Adrenal gland (tissue), 19 donors: ENCODE measurements at regions of chr1 and their contacts with region 1.

Region 1: GRCh38 chr1:22451702-22452474 is at the start of gene ZBTB40:
- DNase-seq: peak; percentile 98 to 99 (median 98)
- H3K4me3 ChIP-seq: peak within 1 kb of the TSS; percentile 62 to 94 (median 80)
- H3K27ac ChIP-seq: peak within 1 kb of the TSS; percentile 88 to 96 (median 93)
- H3K4me1 ChIP-seq: peaks cover 58 to 70% of the 10 kb centered on the region in 2 donors
- H3K27me3 ChIP-seq: no peaks in the 10 kb centered on the region
- CTCF ChIP-seq: peak in 1 of 6 experiments; percentile 10
- POLR2A ChIP-seq: peak in 1 of 2 donors; percentile 22
- total RNA-seq, gene ZBTB40: 18.4 to 45.7 (median 30.8) TPM

Region 2: DNA sequence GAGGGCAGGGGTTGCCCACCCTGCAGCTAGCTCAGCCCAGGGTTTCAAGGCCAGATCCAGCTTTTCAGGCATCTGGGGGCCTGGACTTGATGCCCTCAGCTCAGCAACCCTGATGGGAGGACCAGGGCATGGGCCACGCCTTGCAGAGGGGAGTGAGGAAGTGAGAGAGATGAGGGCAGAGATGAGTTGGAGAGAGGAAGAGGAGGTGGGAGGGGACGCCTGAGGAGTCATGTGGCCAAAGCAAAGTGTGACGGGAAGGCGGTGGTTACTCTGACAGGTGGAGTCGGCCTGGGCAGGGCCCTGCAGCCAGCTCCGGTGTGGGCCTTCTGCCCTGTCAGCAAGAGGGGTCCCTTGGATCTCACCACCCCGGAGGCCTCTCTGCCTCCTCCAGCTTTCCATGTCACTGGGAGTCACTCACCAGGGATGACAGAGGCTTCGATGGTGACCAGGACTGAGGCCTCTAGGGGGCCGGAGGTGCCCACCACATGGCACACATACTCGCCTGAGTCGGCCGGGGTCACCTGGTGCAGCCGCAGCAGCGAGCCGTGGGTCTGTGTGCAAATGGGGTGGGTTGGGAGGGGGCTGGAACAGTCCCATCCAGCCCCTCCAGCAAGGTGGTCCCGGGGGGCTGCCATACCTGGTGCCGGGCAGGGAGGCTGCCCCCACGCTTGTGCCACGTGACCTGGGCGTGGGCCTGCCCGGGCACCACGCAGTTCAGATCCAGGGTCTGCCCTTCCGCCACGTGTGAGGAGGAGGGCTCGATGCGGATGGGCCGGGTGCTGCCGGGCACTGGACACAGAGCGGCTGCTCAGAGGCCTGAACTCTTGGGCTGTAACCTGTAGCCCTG is 599.4 kb before region 1 on chr1:
- intact Hi-C with region 1: no loop called
- DNase-seq: peak in 1 of 7 donors; percentile 11
- H3K4me3 ChIP-seq: no peak overlapping the region
- H3K27ac ChIP-seq: no peak overlapping the region
- H3K4me1 ChIP-seq: no peaks in the 10 kb centered on the region
- H3K27me3 ChIP-seq: no peaks in the 10 kb centered on the region
- CTCF ChIP-seq: no peak
- POLR2A ChIP-seq: no peak

Region 3: GRCh38 chr1:22500471-22500870 is 48.6 kb after region 1 on chr1:
- intact Hi-C with region 1: loop called in 1 of 2 experiments (anchors 10 kb)
- DNase-seq: peak; percentile 49 to 78 (median 68)
- H3K4me3 ChIP-seq: no peak overlapping the region
- H3K27ac ChIP-seq: peak overlapping the region in 4 of 5 donors; percentile 0 to 58 (median 26)
- H3K4me1 ChIP-seq: peaks cover 20 to 57% of the 10 kb centered on the region in 2 donors
- H3K27me3 ChIP-seq: no peaks in the 10 kb centered on the region
- CTCF ChIP-seq: peak in 1 of 6 experiments; percentile 13
- POLR2A ChIP-seq: no peak